GM10248 (cell line): ENCODE measurements at regions of chr4 and their contacts with region 1.

Region 1: GRCh38 chr4:147644471-147644870 is 27.3 kb downstream of the TMEM184C start:
- DNase-seq: no peak
- CTCF ChIP-seq: no peak

Region 2: DNA sequence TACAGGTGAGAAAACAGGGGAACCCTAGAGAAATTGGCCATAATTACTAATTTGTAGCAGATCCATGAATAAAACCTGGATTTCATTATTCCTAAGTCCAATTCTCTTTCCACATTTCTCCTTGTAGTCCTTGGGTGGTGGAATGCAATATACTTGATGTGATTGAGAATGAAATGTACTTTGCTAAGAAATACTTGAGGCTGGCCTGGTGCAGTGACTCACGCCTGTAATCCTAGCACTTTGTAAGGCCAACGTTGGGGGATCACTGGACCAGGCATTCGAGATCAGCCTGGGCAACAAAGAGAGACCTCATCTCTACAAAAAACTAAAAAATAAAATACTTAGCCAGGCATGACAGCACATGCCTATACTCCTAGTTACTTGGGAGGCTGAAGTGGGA is 11.4 kb before region 1 on chr4:
- CTCF ChIA-PET with region 1: interaction called, 10 read pairs
- POLR2A ChIA-PET with region 1: no interaction called
- DNase-seq: no peak
- CTCF ChIP-seq: no peak

Region 3: DNA sequence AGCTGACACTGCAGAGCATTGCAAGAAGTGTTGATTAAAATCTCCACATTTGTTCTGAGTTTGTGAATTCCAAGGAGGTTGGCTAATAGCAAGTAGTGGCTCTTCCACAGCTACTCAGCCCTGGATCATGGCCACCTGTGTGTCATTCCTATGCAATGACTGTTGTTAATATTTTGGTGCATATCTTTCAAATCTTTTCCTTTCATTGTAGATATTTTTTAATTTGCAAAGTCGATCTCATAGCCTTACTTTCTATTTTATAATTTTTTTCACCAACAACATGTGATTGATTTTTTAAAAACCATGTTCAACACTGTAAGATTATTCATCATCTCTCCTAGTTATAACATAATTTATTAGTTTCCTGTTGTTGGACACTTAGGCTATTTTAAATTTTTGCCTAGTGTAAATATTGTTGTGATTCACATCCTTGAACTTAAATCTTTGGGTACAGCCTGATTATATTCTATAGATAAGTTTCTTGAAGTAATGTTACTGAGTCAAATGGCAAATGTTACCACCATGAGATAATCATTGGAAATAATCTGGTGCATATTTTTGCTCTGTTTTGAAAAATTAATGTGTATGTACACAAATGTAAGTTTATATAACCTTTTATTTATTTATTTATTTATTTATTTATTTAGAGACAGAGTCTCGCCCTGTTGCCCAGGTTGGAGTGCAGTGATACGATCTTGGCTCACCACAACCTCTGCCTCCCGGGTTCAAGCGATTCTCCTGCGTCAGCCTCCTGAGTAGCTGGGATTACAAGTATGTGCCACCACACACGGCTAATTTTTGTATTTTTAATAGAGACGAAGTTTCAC is 70.3 kb after region 1 on chr4:
- CTCF ChIA-PET with region 1: no interaction called
- POLR2A ChIA-PET with region 1: no interaction called
- DNase-seq: no peak
- CTCF ChIP-seq: no peak